BJ (cell line): ENCODE measurements at regions of chr3 and their contacts with region 1.

Region 1: DNA sequence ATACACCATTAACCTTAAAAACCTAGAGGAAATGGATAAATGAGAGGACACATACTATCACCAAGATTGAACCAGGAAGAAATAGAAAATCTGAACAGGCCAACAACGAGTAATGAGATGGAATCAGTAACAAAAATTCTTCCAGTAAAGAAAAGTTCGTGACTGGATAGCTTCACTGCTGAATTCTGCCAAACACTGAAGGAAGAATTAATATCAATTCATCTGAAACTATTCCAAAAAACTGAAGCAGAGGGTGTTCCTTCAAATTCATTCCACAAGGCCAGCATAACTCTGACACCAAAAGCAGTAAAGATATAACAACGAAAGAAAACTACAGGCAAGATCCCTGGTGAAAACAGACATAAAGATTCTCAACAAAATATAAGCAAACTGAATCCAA is 195.8 kb upstream of the GPR149 start:
- DNase-seq: no peak
- H3K4me3 ChIP-seq: no peak overlapping the region
- H3K27me3 ChIP-seq: no peaks in the 10 kb centered on the region
- CTCF ChIP-seq: no peak

Region 2: DNA sequence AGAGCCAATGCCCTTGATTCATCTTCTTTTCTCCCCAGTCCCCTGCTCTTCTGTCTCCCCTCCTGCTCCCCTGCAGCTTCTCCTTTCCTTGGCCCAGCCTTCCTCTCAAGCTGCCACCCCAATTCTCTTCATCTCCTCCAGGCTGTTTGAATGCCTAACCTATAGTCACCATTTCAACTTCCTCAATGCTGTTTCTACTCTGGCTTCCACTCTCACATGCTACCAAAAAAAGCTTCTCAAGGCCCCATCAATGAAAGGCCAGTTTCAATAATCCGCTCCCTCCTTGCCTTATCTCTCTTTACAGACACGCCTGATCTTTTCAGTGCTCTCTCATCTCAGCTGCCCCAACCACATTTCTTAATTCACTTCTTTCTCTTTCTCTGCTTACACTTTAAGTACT is 16.4 kb after region 1 on chr3:
- CTCF ChIA-PET with region 1: no interaction called
- POLR2A ChIA-PET with region 1: no interaction called
- DNase-seq: no peak
- H3K4me3 ChIP-seq: no peak overlapping the region
- H3K27me3 ChIP-seq: no peaks in the 10 kb centered on the region
- CTCF ChIP-seq: no peak

Region 3: GRCh38 chr3:154919226-154919625 is 293.5 kb after region 1 on chr3:
- CTCF ChIA-PET with region 1: no interaction called
- POLR2A ChIA-PET with region 1: no interaction called
- DNase-seq: no peak
- H3K4me3 ChIP-seq: no peak overlapping the region
- H3K27me3 ChIP-seq: no peaks in the 10 kb centered on the region
- CTCF ChIP-seq: no peak

Region 4: GRCh38 chr3:155197786-155198185 is 572.0 kb after region 1 on chr3:
- CTCF ChIA-PET with region 1: no interaction called
- POLR2A ChIA-PET with region 1: interaction called, 12 read pairs
- DNase-seq: no peak
- H3K4me3 ChIP-seq: no peak overlapping the region
- H3K27me3 ChIP-seq: no peaks in the 10 kb centered on the region
- CTCF ChIP-seq: no peak